ENCODE measurements at regions of chr3 and their contacts with region 1.

Region 1: GRCh38 chr3:143119009-143119914 is at the start of gene CHST2:
- DNase-seq: peak; percentile 77 to 89
- ATAC-seq: peak; percentile 94
- H3K4me3 ChIP-seq: peak within 1 kb of the TSS; percentile 75 to 96
- H3K27ac ChIP-seq: no peak within 1 kb of the TSS
- H3K4me1 ChIP-seq: no peaks in the 10 kb centered on the region
- H3K27me3 ChIP-seq: no peaks in the 10 kb centered on the region
- total RNA-seq, gene CHST2: 2.8 to 3.7 TPM

Region 2: DNA sequence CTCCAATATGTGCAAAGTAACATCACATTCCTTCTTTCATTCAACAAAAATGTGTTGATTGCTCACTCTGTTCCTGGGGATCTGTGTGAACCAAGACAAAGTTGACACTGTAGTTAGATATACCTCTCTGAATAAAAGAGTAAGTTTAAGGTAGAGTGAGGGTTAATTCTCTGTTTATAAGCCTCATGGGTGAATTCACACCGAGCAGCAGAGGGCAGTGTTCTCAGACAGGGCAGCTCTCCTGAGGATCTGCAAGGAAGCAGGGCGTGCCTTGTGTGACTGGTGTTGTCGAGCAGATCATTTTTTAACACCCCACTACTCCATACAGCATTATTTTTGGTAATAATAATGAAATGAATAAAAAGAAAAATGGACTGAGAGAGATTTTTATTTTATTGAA is 190.2 kb before region 1 on chr3:
- intact Hi-C with region 1: no loop called
- DNase-seq: peak in 1 of 2 donors; percentile 54
- ATAC-seq: no peak
- H3K4me3 ChIP-seq: no peak overlapping the region
- H3K27ac ChIP-seq: no peak overlapping the region
- H3K4me1 ChIP-seq: no peaks in the 10 kb centered on the region
- H3K27me3 ChIP-seq: no peaks in the 10 kb centered on the region

Region 3: DNA sequence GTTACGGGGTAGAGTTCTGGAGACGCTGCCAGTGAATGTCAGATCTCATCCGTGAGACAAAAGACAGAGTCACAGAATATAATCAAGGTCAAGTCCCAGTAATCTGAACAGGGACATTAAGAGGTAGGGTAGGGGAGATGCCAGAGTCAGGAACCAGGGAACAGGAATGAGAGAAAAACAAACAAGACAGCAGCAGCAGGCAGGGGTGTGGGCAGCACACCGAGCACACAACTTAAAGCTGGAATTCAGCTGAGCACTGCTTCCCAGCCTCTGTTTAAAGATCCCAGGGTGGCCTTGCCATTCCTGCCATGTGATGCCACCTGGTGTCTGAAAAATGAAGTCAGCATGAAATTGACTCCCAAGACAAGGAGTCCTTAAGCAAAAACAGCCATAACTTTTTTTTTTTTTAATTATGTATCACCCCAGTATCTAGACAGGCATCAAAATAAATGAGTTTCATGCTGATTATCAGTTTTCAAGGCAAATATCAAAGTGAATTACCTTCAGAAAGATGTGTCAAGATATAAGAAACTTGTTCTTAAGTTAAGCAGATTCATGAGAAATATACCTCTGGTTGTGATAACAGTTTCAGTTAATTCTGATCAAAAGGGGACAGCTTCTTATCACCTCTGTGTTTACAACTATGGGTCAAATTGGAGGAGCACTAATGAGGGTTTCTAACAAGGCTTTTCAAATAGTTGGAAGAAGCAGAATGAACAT is 525.3 kb after region 1 on chr3:
- intact Hi-C with region 1: loop called in 1 of 2 experiments (anchors 5 kb)
- DNase-seq: no peak
- ATAC-seq: peak; percentile 63
- H3K4me3 ChIP-seq: no peak overlapping the region
- H3K27ac ChIP-seq: no peak overlapping the region
- H3K4me1 ChIP-seq: no peaks in the 10 kb centered on the region
- H3K27me3 ChIP-seq: no peaks in the 10 kb centered on the region